MCF 10A (cell line): ENCODE measurements at regions of chr14 and their contacts with region 1.

Region 1: GRCh38 chr14:22319526-22320361 is 269.3 kb downstream of the DAD1 start:
- DNase-seq: peak; percentile 62
- H3K4me3 Mint-ChIP-seq: no peak overlapping the region
- H3K27ac Mint-ChIP-seq: no peak overlapping the region
- H3K4me1 Mint-ChIP-seq: peaks cover 6% of the 10 kb centered on the region
- H3K27me3 Mint-ChIP-seq: peaks cover 13% of the 10 kb centered on the region
- CTCF ChIP-seq: peak; percentile 68

Region 2: DNA sequence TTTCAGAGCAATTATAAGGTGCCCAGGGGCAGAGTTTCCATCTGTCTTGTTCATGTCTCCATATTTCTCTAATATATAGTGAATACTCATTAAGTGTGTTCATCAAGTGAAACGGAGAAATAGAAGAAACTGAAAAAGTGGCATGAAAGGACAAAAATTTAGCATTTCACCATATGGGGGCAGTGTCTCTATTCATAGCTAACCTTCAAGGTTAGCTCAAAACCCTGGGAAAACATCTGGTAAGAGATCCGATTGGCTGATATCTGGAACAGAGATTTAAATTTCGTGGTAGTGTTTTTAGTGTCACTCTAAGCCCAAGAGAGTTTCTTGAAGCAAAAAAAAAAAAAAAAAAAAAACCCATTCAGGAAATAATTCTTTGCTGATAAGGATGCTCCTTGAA is 98.2 kb before region 1 on chr14:
- CTCF ChIA-PET with region 1: interaction called, 9 read pairs
- POLR2A ChIA-PET with region 1: no interaction called
- intact Hi-C with region 1: loop called (anchors 2 kb)
- DNase-seq: peak; percentile 33
- H3K4me3 Mint-ChIP-seq: no peak overlapping the region
- H3K27ac Mint-ChIP-seq: no peak overlapping the region
- H3K4me1 Mint-ChIP-seq: peaks cover 8% of the 10 kb centered on the region
- H3K27me3 Mint-ChIP-seq: peaks cover 24% of the 10 kb centered on the region
- CTCF ChIP-seq: peak; percentile 43

Region 3: GRCh38 chr14:22296722-22297121 is 23.0 kb before region 1 on chr14:
- CTCF ChIA-PET with region 1: interaction called, 13 read pairs
- POLR2A ChIA-PET with region 1: interaction called, 3 read pairs
- intact Hi-C with region 1: no loop called
- DNase-seq: no peak
- H3K4me3 Mint-ChIP-seq: no peak overlapping the region
- H3K27ac Mint-ChIP-seq: no peak overlapping the region
- H3K4me1 Mint-ChIP-seq: peaks cover 13% of the 10 kb centered on the region
- H3K27me3 Mint-ChIP-seq: no peaks in the 10 kb centered on the region
- CTCF ChIP-seq: no peak

Region 4: DNA sequence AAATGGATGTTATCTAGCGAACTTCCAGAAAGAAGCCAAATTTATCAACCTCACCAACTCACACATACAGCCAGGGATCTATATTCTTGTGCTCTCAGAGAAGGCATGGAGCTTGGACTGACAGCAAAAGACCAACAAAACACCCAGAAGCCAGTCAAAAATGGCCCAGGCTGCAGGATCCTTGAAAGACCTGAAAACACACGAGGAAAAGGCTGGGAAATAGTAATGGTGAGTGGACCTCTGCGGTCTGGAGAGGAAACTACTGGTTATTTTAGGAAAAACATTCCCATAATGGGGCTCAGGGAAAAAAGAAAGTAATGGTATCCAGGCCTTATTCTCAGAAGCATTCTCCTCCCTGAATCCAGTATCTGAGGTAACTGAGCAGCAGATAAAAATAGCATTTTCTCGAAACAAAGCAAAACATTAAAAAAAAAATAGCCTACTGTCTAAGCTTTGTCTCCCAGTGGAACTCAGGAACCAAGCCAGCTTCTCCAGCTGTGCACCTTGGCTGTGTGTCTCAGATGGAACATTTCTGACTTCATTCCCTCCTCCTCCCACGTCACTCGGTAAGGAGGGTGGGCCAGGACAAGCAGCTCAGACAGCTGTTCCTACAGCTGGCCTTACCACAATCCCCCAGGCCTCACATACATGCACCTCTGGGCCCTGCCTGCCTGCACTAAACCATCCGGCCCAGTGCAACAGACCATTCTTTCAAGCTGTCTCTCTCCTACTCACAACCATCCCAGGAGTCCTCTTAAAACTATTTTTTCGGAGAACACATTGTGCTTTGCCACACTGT is 19.4 kb after region 1 on chr14:
- CTCF ChIA-PET with region 1: interaction called, 46 read pairs
- POLR2A ChIA-PET with region 1: no interaction called
- intact Hi-C with region 1: no loop called
- DNase-seq: no peak
- H3K4me3 Mint-ChIP-seq: no peak overlapping the region
- H3K27ac Mint-ChIP-seq: no peak overlapping the region
- H3K4me1 Mint-ChIP-seq: no peaks in the 10 kb centered on the region
- H3K27me3 Mint-ChIP-seq: no peaks in the 10 kb centered on the region
- CTCF ChIP-seq: no peak

Region 5: DNA sequence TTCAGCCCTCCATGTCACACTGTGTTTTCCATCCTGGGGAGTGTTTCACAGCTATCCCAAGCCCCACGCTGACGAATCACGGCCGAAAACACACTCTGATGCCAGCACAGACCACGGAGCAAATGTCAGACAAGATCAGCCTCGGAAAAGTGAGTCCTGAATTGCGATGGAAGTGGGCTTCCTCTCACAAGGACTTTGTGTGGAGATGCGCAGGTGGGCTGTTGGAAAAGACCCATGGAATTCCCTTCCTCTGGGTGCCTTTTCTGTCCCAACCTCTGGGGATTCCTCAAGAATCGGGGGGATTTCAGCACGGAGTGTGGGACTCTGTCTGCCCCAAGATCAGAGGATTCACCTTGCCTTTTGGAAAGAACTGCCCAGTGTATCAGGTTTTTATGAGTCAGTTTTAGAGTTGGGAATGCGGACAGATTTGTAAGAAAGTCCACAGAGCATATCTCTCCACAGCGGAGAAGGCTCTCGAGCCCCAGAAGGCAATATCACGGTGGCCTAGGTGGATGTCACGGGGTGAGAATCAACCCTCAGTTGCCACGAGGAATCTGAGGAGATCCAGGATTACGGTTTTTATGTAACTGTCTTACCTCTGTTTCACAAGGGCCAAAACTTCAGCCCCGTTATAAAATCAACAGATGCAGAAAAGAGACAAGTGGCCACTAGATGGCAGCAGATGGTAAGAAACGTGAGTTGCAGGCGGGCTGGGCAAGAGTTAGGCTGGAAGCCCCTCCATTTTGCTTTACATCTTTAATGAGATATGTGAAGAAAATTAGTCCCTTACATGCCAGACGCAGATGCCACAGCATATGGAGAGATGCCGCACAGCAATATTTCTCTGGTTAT is 67.4 kb after region 1 on chr14:
- CTCF ChIA-PET with region 1: interaction called, 45 read pairs
- POLR2A ChIA-PET with region 1: interaction called, 3 read pairs
- intact Hi-C with region 1: no loop called
- DNase-seq: peak; percentile 79
- H3K4me3 Mint-ChIP-seq: no peak overlapping the region
- H3K27ac Mint-ChIP-seq: no peak overlapping the region
- H3K4me1 Mint-ChIP-seq: peaks cover 27% of the 10 kb centered on the region
- H3K27me3 Mint-ChIP-seq: no peaks in the 10 kb centered on the region
- CTCF ChIP-seq: peak; percentile 72